B cell (primary cell): ENCODE measurements at regions of chr16 and their contacts with region 1.

Region 1: DNA sequence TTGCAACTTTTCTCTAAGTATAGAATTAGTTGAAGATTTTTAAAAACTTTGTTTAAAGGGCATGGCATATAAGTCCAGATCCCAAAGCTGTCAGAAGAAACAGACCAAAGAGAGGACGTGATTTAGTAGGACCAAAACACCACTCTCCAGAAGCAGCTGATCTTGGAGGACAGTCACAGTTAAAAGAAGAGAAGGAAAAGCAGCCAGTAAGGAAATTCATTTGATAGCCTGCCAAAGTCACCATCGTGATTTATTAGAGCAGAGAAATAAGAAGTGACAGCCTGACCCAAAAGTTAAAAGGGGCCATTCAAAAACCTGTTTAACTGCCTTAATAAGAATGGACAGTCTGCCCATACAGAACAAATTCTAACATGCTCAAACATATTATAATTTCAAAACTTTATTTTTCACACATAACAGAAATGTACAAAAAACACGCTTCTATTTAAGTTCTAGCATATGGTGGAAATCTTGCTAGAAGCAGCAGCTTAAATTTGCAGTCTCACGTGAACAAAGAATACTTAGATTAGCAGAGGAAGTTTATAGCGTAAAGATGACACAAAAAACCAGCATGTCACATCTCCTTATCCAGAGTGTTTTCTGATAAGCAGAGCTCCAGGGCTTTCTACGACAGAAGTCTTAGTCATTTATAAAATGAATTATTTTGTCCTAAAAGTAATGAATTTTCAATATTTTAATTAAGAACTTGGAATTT is 37.2 kb downstream of the TXNDC11 start:
- DNase-seq: no peak
- ATAC-seq: no peak
- H3K4me3 ChIP-seq: no peak overlapping the region
- H3K4me3 Mint-ChIP-seq: no peak overlapping the region
- H3K27ac ChIP-seq: no peak overlapping the region
- H3K27ac Mint-ChIP-seq: no peak overlapping the region
- H3K4me1 ChIP-seq: peaks cover 0 to 3% of the 10 kb centered on the region in 2 donors
- H3K4me1 Mint-ChIP-seq: peaks cover 16% of the 10 kb centered on the region
- H3K27me3 ChIP-seq: no peaks in the 10 kb centered on the region
- H3K27me3 Mint-ChIP-seq: no peaks in the 10 kb centered on the region
- CTCF ChIP-seq: no peak

Region 2: GRCh38 chr16:11586856-11587642 is 118.4 kb before region 1 on chr16 and contains the start of gene LITAF:
- CTCF ChIA-PET with region 1: no interaction called
- POLR2A ChIA-PET with region 1: no interaction called
- intact Hi-C with region 1: no loop called
- DNase-seq: peak; percentile 78
- ATAC-seq: peak; percentile 59
- H3K4me3 ChIP-seq: peak within 1 kb of the TSS; percentile 71 to 91 (median 75)
- H3K4me3 Mint-ChIP-seq: peak within 1 kb of the TSS; percentile 94
- H3K27ac ChIP-seq: peak within 1 kb of the TSS; percentile 82 to 97
- H3K27ac Mint-ChIP-seq: peak within 1 kb of the TSS; percentile 97
- H3K4me1 ChIP-seq: peaks cover 42 to 50% of the 10 kb centered on the region in 2 donors
- H3K4me1 Mint-ChIP-seq: peaks cover 48% of the 10 kb centered on the region
- H3K27me3 ChIP-seq: no peaks in the 10 kb centered on the region
- H3K27me3 Mint-ChIP-seq: no peaks in the 10 kb centered on the region
- CTCF ChIP-seq: no peak
- total RNA-seq, gene LITAF: 125 and 131 TPM in 2 replicates

Region 3: GRCh38 chr16:11611871-11612664 is 93.4 kb before region 1 on chr16:
- CTCF ChIA-PET with region 1: no interaction called
- POLR2A ChIA-PET with region 1: no interaction called
- intact Hi-C with region 1: no loop called
- DNase-seq: peak; percentile 38
- ATAC-seq: no peak
- H3K4me3 ChIP-seq: no peak overlapping the region
- H3K4me3 Mint-ChIP-seq: peak overlapping the region; percentile 45
- H3K27ac ChIP-seq: no peak overlapping the region
- H3K27ac Mint-ChIP-seq: peak overlapping the region; percentile 63
- H3K4me1 ChIP-seq: peaks cover 30 to 32% of the 10 kb centered on the region in 2 donors
- H3K4me1 Mint-ChIP-seq: peaks cover 41% of the 10 kb centered on the region
- H3K27me3 ChIP-seq: peaks cover 0 to 4% (median 0%) of the 10 kb centered on the region in 4 experiments
- H3K27me3 Mint-ChIP-seq: no peaks in the 10 kb centered on the region
- CTCF ChIP-seq: no peak

Region 4: DNA sequence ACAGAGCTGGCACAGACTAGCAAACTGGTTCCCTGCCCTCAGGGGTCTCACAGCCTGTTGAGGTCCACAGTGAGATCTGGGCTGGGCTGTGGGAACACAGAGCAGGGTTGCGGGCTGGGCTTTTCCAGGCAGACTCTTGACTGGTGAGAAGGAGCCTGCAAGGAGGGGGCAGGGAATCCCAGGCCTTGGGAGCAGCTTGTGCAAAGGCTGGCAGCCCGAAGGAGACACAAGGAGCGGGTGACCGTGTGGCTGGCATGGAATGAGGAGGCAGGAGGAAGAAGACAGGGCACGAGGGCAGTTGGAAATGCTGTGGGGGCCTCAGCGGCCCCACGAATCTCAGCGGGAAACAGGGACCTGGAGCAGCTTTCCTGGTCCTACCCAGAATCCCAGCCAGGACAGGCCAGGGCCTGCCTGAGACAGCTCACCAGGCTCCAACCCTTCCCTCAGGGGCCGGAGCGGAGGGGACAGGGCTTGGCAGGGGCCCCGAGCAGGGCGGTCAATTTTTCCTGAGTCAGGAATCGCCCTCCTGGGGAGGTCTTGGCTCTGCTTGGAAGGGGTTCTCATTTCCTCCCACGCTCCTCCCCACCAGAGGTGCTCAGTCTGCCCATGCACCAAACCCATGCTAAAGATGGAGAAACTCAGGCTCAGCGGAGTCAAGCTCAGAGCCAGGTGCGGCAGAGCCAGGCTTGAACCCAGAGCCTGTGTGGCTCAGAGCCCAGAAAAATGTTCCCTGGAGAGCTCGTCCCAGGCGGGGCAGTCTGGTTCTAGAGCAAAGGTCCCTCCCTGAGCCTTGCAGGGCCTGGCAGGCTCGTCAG is 46.4 kb before region 1 on chr16:
- CTCF ChIA-PET with region 1: no interaction called
- POLR2A ChIA-PET with region 1: interaction called, 12 read pairs
- intact Hi-C with region 1: no loop called
- DNase-seq: no peak
- ATAC-seq: no peak
- H3K4me3 ChIP-seq: no peak overlapping the region
- H3K4me3 Mint-ChIP-seq: no peak overlapping the region
- H3K27ac ChIP-seq: no peak overlapping the region
- H3K27ac Mint-ChIP-seq: no peak overlapping the region
- H3K4me1 ChIP-seq: peaks cover 2% of the 10 kb centered on the region in 2 donors
- H3K4me1 Mint-ChIP-seq: peaks cover 8% of the 10 kb centered on the region
- H3K27me3 ChIP-seq: no peaks in the 10 kb centered on the region
- H3K27me3 Mint-ChIP-seq: no peaks in the 10 kb centered on the region
- CTCF ChIP-seq: no peak

Region 5: GRCh38 chr16:11757671-11758545 is 52.4 kb after region 1 on chr16:
- CTCF ChIA-PET with region 1: no interaction called
- POLR2A ChIA-PET with region 1: no interaction called
- intact Hi-C with region 1: no loop called
- DNase-seq: no peak
- ATAC-seq: no peak
- H3K4me3 ChIP-seq: no peak overlapping the region
- H3K4me3 Mint-ChIP-seq: no peak overlapping the region
- H3K27ac ChIP-seq: no peak overlapping the region
- H3K27ac Mint-ChIP-seq: peak overlapping the region; percentile 26
- H3K4me1 ChIP-seq: peaks cover 0 to 5% of the 10 kb centered on the region in 2 donors
- H3K4me1 Mint-ChIP-seq: peaks cover 7% of the 10 kb centered on the region
- H3K27me3 ChIP-seq: no peaks in the 10 kb centered on the region
- H3K27me3 Mint-ChIP-seq: no peaks in the 10 kb centered on the region
- CTCF ChIP-seq: no peak